CD4-positive, alpha-beta memory T cell (primary cell): ENCODE measurements at regions of chr11 and their contacts with region 1.

Region 1: GRCh38 chr11:72413914-72414628 is 20.3 kb downstream of the CLPB start:
- DNase-seq: peak; percentile 62 to 68 (median 63)
- H3K4me3 ChIP-seq: no peak overlapping the region
- H3K4me3 Mint-ChIP-seq: no peak overlapping the region
- H3K27ac ChIP-seq: no peak overlapping the region
- H3K27ac Mint-ChIP-seq: no peak overlapping the region
- H3K4me1 ChIP-seq: peaks cover under 1% of the 10 kb centered on the region
- H3K4me1 Mint-ChIP-seq: peaks cover 4 to 17% (median 9%) of the 10 kb centered on the region in 4 donors
- H3K27me3 ChIP-seq: no peaks in the 10 kb centered on the region
- H3K27me3 Mint-ChIP-seq: no peaks in the 10 kb centered on the region

Region 2: DNA sequence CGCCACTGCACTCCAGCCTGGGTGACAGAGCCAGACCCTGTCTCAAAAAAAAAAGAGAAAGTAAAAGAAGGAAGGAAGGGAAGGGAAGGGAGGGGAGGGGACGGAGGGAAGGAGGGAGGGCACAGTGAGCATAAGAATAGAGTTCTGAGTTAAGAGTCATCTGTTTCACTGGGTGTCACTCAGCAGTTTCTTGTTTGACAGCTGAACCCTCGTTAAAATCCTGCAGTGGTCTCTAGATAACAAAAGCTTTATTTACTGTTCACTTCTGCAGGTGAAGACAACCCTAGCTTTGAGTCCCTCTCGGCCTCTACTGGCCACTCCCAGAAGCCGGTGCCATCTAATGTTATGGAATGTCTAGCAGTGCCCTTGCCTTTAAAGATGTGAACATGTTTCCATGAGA is 51.0 kb before region 1 on chr11:
- CTCF ChIA-PET with region 1: no interaction called
- POLR2A ChIA-PET with region 1: no interaction called
- intact Hi-C with region 1: no loop called
- DNase-seq: no peak
- H3K4me3 ChIP-seq: no peak overlapping the region
- H3K4me3 Mint-ChIP-seq: no peak overlapping the region
- H3K27ac ChIP-seq: no peak overlapping the region
- H3K27ac Mint-ChIP-seq: no peak overlapping the region
- H3K4me1 ChIP-seq: no peaks in the 10 kb centered on the region
- H3K4me1 Mint-ChIP-seq: peaks cover 0 to 1% (median 0%) of the 10 kb centered on the region in 4 donors
- H3K27me3 ChIP-seq: no peaks in the 10 kb centered on the region
- H3K27me3 Mint-ChIP-seq: no peaks in the 10 kb centered on the region

Region 3: DNA sequence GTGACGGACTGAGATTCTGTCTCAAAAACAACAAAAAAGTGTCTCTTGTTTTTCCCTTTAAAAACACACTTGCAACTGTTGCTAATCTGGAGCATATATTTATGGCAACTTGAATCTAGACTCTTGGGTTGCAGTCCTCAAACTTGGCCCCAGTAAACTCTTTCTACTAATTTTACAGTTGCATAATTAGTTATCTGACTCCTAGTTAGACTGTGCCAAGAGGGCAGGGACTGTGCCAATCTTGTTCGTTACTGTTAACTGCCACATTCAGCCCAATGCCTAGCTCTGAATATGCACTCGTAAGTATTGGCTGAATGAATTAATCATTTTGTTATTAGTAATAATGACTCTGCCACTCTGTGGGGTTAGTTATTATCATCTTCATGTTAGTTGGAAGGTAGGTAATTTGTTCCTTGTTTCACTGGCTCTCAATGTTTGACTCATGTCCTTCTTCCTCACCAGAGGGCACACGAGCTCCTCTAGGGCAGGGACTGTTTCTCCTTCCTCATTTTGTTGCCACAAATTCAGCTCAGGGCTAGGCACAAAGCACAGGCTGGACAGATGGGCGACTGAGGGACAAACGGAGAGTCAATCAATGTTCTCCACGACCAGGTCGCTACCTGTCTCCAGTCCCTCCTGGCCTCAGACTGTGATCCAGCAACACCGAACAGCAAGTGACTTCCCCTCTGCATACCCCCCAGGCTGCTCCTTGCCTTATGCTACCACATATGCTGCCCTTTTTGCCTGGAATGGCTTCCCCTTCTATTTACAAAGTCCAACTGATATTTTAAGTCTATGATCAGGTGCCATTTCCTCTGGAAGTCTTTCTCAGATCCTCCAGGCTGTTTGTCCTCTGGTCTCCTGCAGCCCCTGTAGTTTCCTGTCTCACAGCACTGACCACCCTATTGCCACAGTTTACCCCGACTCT is 11.2 kb after region 1 on chr11:
- CTCF ChIA-PET with region 1: interaction called, 30 read pairs
- POLR2A ChIA-PET with region 1: no interaction called
- intact Hi-C with region 1: no loop called
- DNase-seq: no peak
- H3K4me3 ChIP-seq: no peak overlapping the region
- H3K4me3 Mint-ChIP-seq: no peak overlapping the region
- H3K27ac ChIP-seq: no peak overlapping the region
- H3K27ac Mint-ChIP-seq: peak overlapping the region in 4 of 7 donors; percentile 12 to 82 (median 62)
- H3K4me1 ChIP-seq: peaks cover 12% of the 10 kb centered on the region
- H3K4me1 Mint-ChIP-seq: peaks cover 9 to 14% (median 12%) of the 10 kb centered on the region in 4 donors
- H3K27me3 ChIP-seq: no peaks in the 10 kb centered on the region
- H3K27me3 Mint-ChIP-seq: no peaks in the 10 kb centered on the region